ENCODE measurements at regions of chr1 and their contacts with region 1.

Region 1: GRCh38 chr1:39098546-39099250 is 72.5 kb downstream of the NDUFS5 start:
- DNase-seq: peak; percentile 84
- H3K4me3 Mint-ChIP-seq: no peak overlapping the region
- H3K27ac Mint-ChIP-seq: no peak overlapping the region
- H3K4me1 Mint-ChIP-seq: peaks cover 18% of the 10 kb centered on the region
- H3K27me3 Mint-ChIP-seq: no peaks in the 10 kb centered on the region
- CTCF ChIP-seq: peak; percentile 77

Region 2: DNA sequence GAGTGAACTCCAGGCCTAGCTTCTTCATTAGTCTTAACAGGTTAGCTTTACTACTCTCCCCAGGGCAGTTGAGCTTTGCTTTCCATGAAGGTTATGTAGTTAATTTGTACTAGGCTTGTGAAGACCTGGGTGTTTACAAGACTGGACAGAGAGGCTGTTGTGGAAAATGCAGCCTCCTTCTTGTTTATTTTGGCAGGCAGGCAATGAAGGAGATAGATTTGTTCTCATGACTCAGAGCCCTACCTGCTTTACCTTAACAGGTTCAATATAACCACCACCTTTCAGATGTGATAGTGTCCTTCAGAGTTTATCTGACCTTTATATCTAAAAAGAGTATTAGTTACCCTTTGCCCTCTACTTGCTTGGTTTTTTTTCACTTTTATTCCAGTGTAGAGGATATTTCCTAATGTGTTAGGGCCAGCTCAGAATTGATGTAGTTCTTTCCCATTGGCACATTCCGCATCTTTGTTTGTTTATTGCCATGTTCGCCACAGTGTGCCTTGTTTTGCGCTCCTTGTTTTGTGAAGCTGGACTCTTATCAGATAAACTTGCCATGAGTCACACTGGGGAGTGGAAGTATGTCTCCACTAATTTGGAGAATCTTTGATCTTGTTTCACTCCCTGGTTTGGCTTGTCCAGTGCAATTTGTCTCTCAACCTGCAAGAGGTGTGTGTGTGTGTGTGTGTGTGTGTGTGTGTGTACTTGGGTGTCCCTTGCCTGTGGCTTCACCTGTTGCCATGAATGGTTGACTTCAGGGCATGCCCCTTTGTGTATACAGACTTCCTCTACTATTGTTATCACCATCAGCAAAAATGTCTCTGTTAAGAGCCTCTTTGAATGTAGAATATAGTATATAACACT is 18.4 kb after region 1 on chr1:
- CTCF ChIA-PET with region 1: interaction called, 5 read pairs
- POLR2A ChIA-PET with region 1: interaction called, 427 read pairs
- intact Hi-C with region 1: no loop called
- DNase-seq: peak; percentile 65
- H3K4me3 Mint-ChIP-seq: no peak overlapping the region
- H3K27ac Mint-ChIP-seq: peak overlapping the region; percentile 5
- H3K4me1 Mint-ChIP-seq: peaks cover 8% of the 10 kb centered on the region
- H3K27me3 Mint-ChIP-seq: no peaks in the 10 kb centered on the region
- CTCF ChIP-seq: no peak

Region 3: DNA sequence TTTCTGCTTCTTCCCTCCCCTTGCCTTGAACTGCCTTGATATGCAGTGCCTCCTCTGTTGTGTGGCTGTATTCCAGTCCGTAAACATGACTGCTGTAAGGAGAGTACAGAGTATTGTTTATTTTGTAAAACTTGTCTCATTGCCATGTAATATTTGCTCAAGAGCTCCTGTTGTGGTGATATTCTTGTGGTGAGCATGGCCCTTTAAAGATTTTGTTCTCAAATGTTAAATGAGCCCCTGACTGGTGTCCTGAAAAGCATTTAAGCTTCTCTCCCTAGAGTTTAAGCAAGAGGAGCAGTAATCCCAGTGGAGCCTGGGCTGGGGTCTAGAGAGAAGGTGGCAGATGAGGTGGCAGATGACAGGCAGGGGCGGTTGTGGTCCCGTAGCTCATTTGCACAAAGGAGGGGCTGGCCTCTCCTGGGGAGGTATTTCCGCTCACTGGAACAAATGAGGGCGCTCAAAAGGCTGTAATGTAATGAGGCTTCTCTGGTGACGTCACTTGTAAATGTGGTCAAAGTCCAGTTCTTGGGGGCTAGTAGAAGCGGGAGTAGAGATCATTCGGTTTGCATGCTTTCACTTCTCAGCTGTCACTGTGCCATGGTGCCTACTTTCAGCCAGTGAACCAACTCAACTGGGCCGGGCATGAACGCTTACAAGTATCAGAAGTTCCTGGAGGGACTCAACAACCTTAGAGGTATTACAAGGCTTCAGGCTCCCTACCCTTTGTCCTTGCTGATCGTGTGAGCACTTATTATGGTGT is 59.8 kb after region 1 on chr1:
- CTCF ChIA-PET with region 1: interaction called, 8 read pairs
- POLR2A ChIA-PET with region 1: interaction called, 20 read pairs
- intact Hi-C with region 1: no loop called
- DNase-seq: peak; percentile 49
- H3K4me3 Mint-ChIP-seq: peak overlapping the region; percentile 70
- H3K27ac Mint-ChIP-seq: peak overlapping the region; percentile 82
- H3K4me1 Mint-ChIP-seq: peaks cover 59% of the 10 kb centered on the region
- H3K27me3 Mint-ChIP-seq: no peaks in the 10 kb centered on the region
- CTCF ChIP-seq: no peak

Region 4: DNA sequence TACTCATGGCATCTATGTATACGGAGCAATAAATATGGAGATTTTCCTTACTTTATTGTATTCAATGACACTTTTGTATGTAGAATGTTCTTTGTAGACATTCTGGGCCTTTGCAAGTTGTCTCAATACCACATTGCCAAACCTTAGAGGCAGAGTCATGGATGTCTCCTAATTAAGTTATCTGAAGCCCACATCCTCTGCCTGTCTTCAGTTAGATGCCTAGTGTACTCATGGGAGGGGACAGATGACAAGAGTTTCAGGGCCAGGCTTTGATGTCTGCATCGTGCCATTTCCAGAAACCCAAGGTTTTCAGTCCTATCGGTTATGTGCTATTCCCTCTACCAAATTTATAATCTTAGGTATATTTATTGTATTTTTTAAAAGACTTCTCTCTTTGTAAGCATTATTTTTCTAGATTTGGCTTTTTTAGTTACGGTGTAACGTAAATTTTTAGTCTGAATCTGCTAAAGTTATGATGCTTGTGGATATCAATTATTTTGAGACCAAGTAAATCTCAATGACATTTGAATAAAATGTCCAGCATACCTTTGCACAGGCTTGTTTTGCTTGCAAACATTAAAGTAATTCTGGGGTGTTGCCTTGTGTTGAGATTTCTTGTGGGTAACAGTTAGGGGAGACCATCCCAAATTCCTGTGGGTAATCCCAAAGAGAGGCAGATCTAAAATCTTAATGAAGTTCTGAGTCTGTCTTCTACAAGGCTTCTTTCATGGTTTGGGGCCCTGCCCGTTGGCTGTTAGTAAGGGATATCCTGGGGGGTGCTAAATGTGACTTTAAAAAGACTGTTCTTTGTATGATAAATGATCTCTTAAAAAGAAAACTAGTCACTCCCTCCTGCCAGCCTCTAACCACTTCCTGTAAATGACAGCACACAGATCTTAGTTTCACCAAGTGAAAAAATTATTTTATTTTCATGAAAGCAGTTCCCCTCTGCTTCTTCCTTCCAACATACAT is 97.8 kb after region 1 on chr1:
- CTCF ChIA-PET with region 1: interaction called, 75 read pairs
- POLR2A ChIA-PET with region 1: interaction called, 83 read pairs
- intact Hi-C with region 1: loop called (anchors 1 kb)
- DNase-seq: no peak
- H3K4me3 Mint-ChIP-seq: no peak overlapping the region
- H3K27ac Mint-ChIP-seq: peak overlapping the region; percentile 59
- H3K4me1 Mint-ChIP-seq: peaks cover 32% of the 10 kb centered on the region
- H3K27me3 Mint-ChIP-seq: no peaks in the 10 kb centered on the region
- CTCF ChIP-seq: no peak

Region 5: GRCh38 chr1:39293375-39294070 is 194.8 kb after region 1 on chr1:
- CTCF ChIA-PET with region 1: interaction called, 14 read pairs
- POLR2A ChIA-PET with region 1: no interaction called
- intact Hi-C with region 1: no loop called
- DNase-seq: no peak
- H3K4me3 Mint-ChIP-seq: no peak overlapping the region
- H3K27ac Mint-ChIP-seq: no peak overlapping the region
- H3K4me1 Mint-ChIP-seq: no peaks in the 10 kb centered on the region
- H3K27me3 Mint-ChIP-seq: no peaks in the 10 kb centered on the region
- CTCF ChIP-seq: no peak

Region 6: DNA sequence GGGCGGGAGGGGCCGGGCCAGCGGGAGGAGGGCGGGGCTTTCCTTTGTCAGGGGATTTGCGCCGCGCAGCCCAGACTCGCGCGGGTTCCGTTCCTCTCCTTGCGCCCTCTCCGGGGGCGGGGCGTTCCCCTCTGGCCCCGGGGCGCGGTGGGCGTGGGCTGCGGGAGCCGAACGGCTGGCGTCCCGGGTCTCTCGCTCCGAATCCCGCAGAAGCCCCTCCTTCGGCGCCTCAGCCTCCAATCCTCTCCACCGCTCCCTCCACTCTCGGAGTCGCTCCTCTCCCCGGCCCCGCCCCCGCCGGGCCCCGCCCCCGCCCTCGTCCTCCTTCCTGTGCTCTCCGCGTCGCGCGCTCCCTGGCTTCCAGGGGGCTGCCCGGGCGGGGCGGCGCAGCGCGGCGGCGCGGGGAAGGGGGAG is 309.9 kb after region 1 on chr1:
- CTCF ChIA-PET with region 1: interaction called, 25 read pairs
- POLR2A ChIA-PET with region 1: interaction called, 9 read pairs
- intact Hi-C with region 1: loop called (anchors 1 kb)
- DNase-seq: peak; percentile 93
- H3K4me3 Mint-ChIP-seq: peak overlapping the region; percentile 83
- H3K27ac Mint-ChIP-seq: peak overlapping the region; percentile 71
- H3K4me1 Mint-ChIP-seq: peaks cover 55% of the 10 kb centered on the region
- H3K27me3 Mint-ChIP-seq: no peaks in the 10 kb centered on the region
- CTCF ChIP-seq: no peak

Region 7: GRCh38 chr1:39585933-39586332 is 487.2 kb after region 1 on chr1:
- CTCF ChIA-PET with region 1: no interaction called
- POLR2A ChIA-PET with region 1: no interaction called
- intact Hi-C with region 1: no loop called
- DNase-seq: no peak
- H3K4me3 Mint-ChIP-seq: no peak overlapping the region
- H3K27ac Mint-ChIP-seq: no peak overlapping the region
- H3K4me1 Mint-ChIP-seq: no peaks in the 10 kb centered on the region
- H3K27me3 Mint-ChIP-seq: no peaks in the 10 kb centered on the region
- CTCF ChIP-seq: no peak

Region 8: DNA sequence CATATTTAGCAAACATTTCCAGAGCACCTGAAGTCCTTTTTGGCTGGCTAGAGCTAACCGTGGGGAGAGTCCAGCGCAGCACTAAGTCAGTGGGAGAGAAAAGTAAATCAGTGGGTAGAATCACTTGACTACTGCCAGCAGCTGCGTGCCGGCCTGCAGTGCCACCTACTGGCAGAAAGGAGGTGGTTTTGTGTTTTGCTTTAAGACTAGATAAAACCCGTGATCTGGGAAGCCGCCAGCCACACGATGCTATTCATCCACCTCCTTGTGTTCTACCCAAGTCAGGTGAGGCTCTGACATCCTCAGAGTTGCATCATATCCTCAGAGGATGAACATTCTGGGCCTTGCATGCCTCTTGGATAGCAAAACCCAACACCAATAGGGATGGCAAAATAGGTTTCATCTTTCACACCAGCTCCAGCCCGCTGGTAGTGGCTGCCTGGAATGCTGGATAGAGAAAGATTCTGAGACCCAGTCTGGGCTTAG is 554.9 kb after region 1 on chr1:
- CTCF ChIA-PET with region 1: interaction called, 5 read pairs
- POLR2A ChIA-PET with region 1: no interaction called
- intact Hi-C with region 1: loop called (anchors 1 kb)
- DNase-seq: peak; percentile 82
- H3K4me3 Mint-ChIP-seq: no peak overlapping the region
- H3K27ac Mint-ChIP-seq: peak overlapping the region; percentile 71
- H3K4me1 Mint-ChIP-seq: peaks cover 10% of the 10 kb centered on the region
- H3K27me3 Mint-ChIP-seq: no peaks in the 10 kb centered on the region
- CTCF ChIP-seq: peak; percentile 86